ENCODE measurements at regions of chr5 and their contacts with region 1.

Region 1: DNA sequence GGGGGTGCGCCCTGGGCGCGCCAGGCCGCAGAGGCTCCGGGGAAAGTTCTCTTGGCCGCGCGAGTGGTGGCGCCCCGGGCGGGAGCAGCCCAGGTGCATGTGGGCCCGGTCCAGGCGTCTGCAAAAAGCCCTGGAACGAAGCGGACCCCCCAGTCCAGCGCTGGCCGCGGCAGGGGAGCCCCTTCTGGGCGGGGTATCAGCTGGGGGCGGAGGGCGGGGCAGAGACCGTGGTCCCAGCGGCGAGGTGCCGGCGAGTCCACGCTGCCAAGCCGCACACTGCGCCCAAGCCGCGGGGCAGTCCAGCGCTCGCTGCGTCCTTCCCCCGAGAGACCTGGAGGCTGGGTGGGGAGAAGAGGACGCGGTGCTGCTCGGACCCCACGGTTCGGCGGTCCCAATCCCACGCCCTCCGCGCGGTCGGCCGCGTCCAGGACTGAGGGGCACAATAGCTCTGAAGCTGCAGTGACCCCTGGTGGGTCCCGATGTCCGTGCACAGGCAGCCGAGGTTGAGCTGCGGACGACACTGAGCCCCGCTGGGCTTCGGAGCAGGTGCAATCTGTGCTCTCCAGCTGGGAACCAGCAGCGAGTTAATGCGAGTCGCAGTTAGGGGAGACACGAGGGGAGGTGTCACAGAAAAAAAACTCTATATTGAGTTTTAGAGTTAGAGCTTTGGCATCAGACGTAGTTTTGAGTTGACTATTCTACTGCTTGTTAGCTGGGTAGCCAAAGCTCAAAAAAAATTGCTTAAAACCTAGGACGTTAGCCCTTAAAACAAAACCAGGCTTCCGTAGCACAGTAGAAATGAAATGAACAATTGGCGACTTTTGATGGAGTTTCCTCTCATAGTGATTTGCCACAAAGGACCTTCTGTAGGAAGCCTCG is 1.1 kb upstream of the EPB41L4A start:
- DNase-seq: peak; percentile 91
- ATAC-seq: peak; percentile 92 to 93

Region 2: GRCh38 chr5:112174959-112175594 is 245.1 kb before region 1 on chr5:
- intact Hi-C with region 1: loop called (anchors 2 to 10 kb)
- DNase-seq: no peak
- ATAC-seq: peak; percentile 66 to 74

Region 3: GRCh38 chr5:112210430-112211005 is 209.7 kb before region 1 on chr5:
- intact Hi-C with region 1: loop called (anchors 1 to 5 kb)
- DNase-seq: peak; percentile 47
- ATAC-seq: peak in 1 of 2 donors; percentile 68

Region 4: GRCh38 chr5:112253478-112254250 is 166.6 kb before region 1 on chr5:
- intact Hi-C with region 1: loop called in 1 of 2 experiments (anchors 10 kb)
- DNase-seq: peak; percentile 50
- ATAC-seq: peak; percentile 88 to 96

Region 5: DNA sequence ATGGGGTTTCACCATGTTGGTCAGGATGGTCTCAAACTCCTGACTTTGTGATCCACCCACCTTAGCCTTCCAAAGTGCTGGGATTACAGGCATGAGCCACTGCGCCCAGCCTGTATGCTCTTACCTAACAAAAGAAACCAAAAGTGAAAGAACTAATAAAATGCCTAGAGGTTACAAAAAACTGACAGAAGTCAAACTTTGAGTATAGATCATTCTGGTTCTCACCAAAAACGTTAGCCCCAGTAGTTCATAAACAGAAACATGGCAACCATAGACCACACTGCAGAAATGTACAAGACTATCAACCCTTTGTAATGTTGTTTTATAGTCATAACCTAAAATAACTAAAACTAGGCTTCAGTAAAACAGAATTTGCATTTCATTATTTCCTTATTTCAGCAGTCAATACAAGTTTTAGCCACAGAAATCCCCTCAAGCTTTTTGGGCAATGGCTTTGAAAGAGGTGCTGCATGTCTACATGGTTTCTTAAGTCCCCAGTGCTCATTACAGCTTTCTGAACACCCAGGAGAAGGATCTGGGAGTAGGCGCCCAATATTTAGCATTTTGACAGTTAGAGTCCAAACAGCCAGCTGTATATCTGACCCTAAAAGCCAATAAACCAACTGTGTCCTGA is 73.7 kb before region 1 on chr5:
- intact Hi-C with region 1: loop called in 1 of 2 experiments (anchors 10 kb)
- DNase-seq: no peak
- ATAC-seq: no peak

Region 6: GRCh38 chr5:112467485-112467884 is 47.3 kb after region 1 on chr5:
- intact Hi-C with region 1: no loop called
- DNase-seq: no peak
- ATAC-seq: no peak

Region 7: GRCh38 chr5:112512901-112513300 is 92.7 kb after region 1 on chr5:
- intact Hi-C with region 1: no loop called
- DNase-seq: no peak
- ATAC-seq: no peak